ENCODE measurements at regions of chr20 and their contacts with region 1.

Region 1: GRCh38 chr20:40046703-40047102 is 642.3 kb downstream of the MAFB start:
- DNase-seq: no peak
- ATAC-seq: no peak

Region 2: GRCh38 chr20:39849664-39850063 is 197.0 kb before region 1 on chr20:
- intact Hi-C with region 1: no loop called
- DNase-seq: peak; percentile 95
- ATAC-seq: peak; percentile 98

Region 3: GRCh38 chr20:39986173-39986904 is 60.4 kb before region 1 on chr20:
- intact Hi-C with region 1: loop called in 1 of 2 experiments (anchors 10 kb)
- DNase-seq: peak; percentile 63
- ATAC-seq: peak; percentile 92 to 95

Region 4: DNA sequence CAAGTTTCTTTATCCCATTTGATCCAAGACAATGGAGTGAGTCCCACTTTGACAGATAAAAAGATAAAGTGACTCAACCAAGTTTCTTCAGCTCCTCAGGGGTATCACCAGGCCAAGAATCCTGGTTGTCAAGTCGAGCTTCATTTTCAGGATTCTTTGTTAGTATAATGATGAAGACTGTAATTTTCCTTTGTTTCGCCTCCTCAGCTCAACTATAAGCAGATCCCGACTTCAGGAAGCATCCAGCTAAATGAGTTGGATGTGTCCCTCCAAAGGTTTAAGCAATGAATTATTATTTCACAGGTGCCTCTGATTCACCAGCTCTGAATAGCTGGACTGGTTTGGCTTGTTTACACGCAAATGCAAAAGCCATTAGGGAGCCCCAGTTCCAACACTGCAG is 403.4 kb after region 1 on chr20:
- intact Hi-C with region 1: no loop called
- DNase-seq: no peak
- ATAC-seq: no peak